WTC11 (cell line): ENCODE measurements at regions of chr3 and their contacts with region 1.

Region 1: DNA sequence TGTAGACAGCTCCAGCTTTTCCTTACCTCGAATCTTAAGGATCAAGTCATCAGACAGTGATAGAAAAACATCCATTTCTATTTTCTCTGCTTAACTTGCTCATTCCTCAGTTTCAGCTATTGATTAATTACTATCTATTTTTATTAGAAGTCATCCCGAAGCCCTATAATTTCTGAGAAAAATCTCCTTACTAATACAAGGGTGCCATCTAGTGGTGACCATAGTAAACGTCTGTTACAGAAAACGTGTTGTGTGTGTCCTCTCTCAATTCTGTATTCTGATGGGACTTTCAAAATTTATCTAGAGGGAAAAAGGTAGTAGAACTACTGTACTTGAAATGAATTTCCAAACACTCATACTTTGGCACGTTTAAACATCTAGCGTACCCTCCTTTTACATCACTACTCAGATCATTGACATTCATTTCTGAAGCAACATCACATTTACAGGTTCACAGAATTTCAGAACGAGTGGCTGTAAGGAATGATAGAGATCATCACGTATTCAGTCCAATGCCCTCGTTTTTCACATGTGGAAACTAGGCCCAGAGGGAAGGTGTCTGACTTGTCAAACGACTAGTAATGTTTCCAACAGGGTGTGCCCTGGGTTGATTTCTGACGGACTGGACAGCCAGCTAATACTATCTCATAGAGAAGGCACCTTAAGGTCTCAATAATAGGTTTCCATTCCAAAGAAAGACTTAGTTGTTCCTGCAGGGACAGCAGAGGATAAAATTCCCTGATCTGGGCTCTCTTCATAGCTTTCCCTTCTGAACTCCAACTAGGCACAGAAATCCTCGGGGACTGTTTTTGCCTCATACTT is 25.6 kb downstream of the HACD2 start:
- DNase-seq: no peak
- ATAC-seq: no peak
- H3K4me3 Mint-ChIP-seq: no peak overlapping the region
- H3K27ac Mint-ChIP-seq: no peak overlapping the region
- H3K4me1 Mint-ChIP-seq: peaks cover 3% of the 10 kb centered on the region
- H3K27me3 Mint-ChIP-seq: no peaks in the 10 kb centered on the region
- CTCF ChIP-seq: peak; percentile 56

Region 2: GRCh38 chr3:123547881-123548519 is 11.3 kb before region 1 on chr3:
- CTCF ChIA-PET with region 1: interaction called, 13 read pairs
- POLR2A ChIA-PET with region 1: interaction called, 5 read pairs
- DNase-seq: no peak
- ATAC-seq: no peak
- H3K4me3 Mint-ChIP-seq: no peak overlapping the region
- H3K27ac Mint-ChIP-seq: 0 out of 2 replicates have a peak overlapping the region, but pooled peaks have one; percentile 53
- H3K4me1 Mint-ChIP-seq: no peaks in the 10 kb centered on the region
- H3K27me3 Mint-ChIP-seq: no peaks in the 10 kb centered on the region
- CTCF ChIP-seq: no peak

Region 3: GRCh38 chr3:123571264-123571972 is 12.2 kb after region 1 on chr3:
- CTCF ChIA-PET with region 1: interaction called, 21 read pairs
- POLR2A ChIA-PET with region 1: no interaction called
- DNase-seq: peak; percentile 46
- ATAC-seq: peak; percentile 98
- H3K4me3 Mint-ChIP-seq: no peak overlapping the region
- H3K27ac Mint-ChIP-seq: peak overlapping the region; percentile 48; the same call in 1 of the 2 replicates
- H3K4me1 Mint-ChIP-seq: peaks cover 19% of the 10 kb centered on the region
- H3K27me3 Mint-ChIP-seq: no peaks in the 10 kb centered on the region
- CTCF ChIP-seq: no peak